ENCODE measurements at regions of chr5 and their contacts with region 1.

Region 1: DNA sequence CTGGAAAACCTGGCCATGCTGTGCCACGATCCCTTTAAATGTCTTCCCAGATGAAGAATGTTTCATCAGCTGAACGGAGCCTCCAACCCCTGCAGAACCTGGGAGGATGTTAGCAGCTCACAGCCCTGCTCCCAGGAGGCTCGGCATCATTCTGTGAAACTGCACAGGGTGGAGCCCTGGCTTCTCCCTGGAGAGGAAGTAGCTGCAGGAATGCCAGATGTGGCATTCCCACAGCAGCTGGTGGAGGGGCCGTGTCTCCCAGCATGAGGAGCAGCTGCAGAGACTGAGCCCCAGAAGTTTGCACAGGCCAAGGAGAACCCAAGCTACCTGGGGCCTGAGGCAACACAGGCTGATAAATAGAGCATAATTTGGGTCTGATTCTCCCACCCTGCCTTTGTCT is 165.8 kb upstream of the MAP3K1 start:
- DNase-seq: no peak
- H3K4me3 ChIP-seq: no peak overlapping the region
- CTCF ChIP-seq: no peak
- POLR2A ChIP-seq: no peak

Region 2: DNA sequence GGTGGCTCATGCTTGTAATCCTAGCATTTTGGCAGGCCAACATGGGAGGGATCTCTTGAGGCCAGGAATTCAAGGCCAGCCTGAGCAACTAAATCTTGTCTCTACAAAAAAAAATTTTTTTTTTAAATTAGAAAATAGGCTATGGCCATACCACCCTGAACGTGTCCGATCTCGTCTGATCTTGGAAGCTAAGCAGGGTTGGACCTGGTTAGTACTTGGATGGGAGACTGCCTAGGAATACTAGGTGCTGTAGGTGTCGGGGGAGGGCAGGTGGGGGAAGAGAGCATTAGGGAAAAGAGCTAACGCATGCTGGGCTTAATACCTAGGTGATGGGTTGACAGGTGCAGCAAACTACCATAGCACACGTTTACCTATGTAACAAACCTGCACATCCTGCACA is 872.2 kb before region 1 on chr5:
- intact Hi-C with region 1: no loop called
- DNase-seq: no peak
- H3K4me3 ChIP-seq: no peak overlapping the region
- CTCF ChIP-seq: no peak
- POLR2A ChIP-seq: no peak

Region 3: GRCh38 chr5:56464935-56465768 is 184.4 kb before region 1 on chr5:
- intact Hi-C with region 1: loop called (anchors 5 kb)
- DNase-seq: no peak
- H3K4me3 ChIP-seq: no peak overlapping the region
- CTCF ChIP-seq: no peak
- POLR2A ChIP-seq: no peak

Region 4: GRCh38 chr5:56585461-56585860 is 64.1 kb before region 1 on chr5:
- intact Hi-C with region 1: no loop called
- DNase-seq: peak in 1 of 2 donors; percentile 36
- H3K4me3 ChIP-seq: no peak overlapping the region
- CTCF ChIP-seq: no peak
- POLR2A ChIP-seq: no peak